Endothelial cell of umbilical vein (primary cell): ENCODE measurements at regions of chr7 and their contacts with region 1.

Region 1: DNA sequence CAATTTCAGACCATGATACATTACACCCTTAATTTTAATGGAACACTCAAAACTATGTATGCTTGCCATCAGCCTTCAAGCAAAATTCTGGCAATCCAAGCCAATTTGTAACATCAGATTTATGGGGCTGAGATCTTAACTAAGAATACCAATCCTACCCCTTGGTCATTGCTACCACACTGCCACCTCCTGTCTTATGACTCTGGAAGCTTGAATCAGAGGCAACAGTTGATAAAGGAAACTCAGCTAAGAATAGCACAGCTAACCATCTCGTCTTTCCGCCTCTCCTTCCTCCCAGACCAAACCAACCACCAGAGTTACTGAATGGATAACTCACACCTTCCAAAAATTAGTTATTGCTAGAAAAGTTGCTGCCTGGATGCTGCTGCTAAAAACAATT is 7.4 kb downstream of the IGF2BP3 start:
- DNase-seq: peak; percentile 81
- H3K4me3 ChIP-seq: no peak overlapping the region
- H3K27ac ChIP-seq: peak overlapping the region; percentile 31
- H3K4me1 ChIP-seq: peaks cover 42% of the 10 kb centered on the region
- H3K27me3 ChIP-seq: no peaks in the 10 kb centered on the region
- CTCF ChIP-seq: peak; percentile 25 to 41
- POLR2A ChIP-seq: no peak

Region 2: GRCh38 chr7:23279819-23280525 is 182.9 kb before region 1 on chr7:
- CTCF ChIA-PET with region 1: interaction called, 18 read pairs
- POLR2A ChIA-PET with region 1: no interaction called
- dilution Hi-C with region 1: no loop called
- intact Hi-C with region 1: loop called (anchors 1 kb)
- DNase-seq: no peak
- H3K4me3 ChIP-seq: no peak overlapping the region
- H3K27ac ChIP-seq: no peak overlapping the region
- H3K4me1 ChIP-seq: no peaks in the 10 kb centered on the region
- H3K27me3 ChIP-seq: no peaks in the 10 kb centered on the region
- CTCF ChIP-seq: no peak
- POLR2A ChIP-seq: no peak

Region 3: GRCh38 chr7:23347682-23348180 is 115.1 kb before region 1 on chr7:
- CTCF ChIA-PET with region 1: interaction called, 24 read pairs
- POLR2A ChIA-PET with region 1: no interaction called
- dilution Hi-C with region 1: no loop called
- intact Hi-C with region 1: no loop called
- DNase-seq: peak; percentile 88
- H3K4me3 ChIP-seq: peak overlapping the region; percentile 27 to 67 (median 61)
- H3K27ac ChIP-seq: peak overlapping the region; percentile 88
- H3K4me1 ChIP-seq: peaks cover 80% of the 10 kb centered on the region
- H3K27me3 ChIP-seq: no peaks in the 10 kb centered on the region
- CTCF ChIP-seq: no peak
- POLR2A ChIP-seq: peak; percentile 44

Region 4: DNA sequence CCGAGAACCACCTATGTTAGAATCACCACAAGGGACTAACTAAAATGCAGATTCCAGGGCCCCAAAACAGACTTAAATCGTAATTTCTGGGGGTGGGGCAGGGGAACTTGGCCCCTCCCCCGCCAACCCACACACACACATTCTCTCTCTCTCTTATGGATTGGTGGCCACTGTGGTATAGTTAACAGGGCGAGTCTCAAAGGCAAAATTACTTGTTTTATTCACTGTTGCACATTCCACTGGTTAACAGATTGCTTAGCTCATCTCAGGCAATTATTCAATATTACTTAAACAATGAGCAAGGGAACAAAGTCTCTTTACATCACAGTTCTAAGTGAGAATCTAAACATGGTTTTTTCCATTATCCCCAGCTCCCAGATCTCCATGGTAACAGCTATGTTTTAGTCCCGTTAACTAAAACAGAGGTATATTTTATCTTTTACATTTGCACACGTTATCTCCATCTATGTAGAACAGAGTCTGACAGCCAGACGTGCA is 31.1 kb before region 1 on chr7:
- CTCF ChIA-PET with region 1: interaction called, 15 read pairs
- POLR2A ChIA-PET with region 1: interaction called, 4 read pairs
- dilution Hi-C with region 1: no loop called
- intact Hi-C with region 1: loop called (anchors 1 kb)
- DNase-seq: no peak
- H3K4me3 ChIP-seq: no peak overlapping the region
- H3K27ac ChIP-seq: peak overlapping the region; percentile 49
- H3K4me1 ChIP-seq: peaks cover 22% of the 10 kb centered on the region
- H3K27me3 ChIP-seq: no peaks in the 10 kb centered on the region
- CTCF ChIP-seq: no peak
- POLR2A ChIP-seq: no peak

Region 5: GRCh38 chr7:23445326-23445725 is 17.5 kb before region 1 on chr7:
- CTCF ChIA-PET with region 1: interaction called, 28 read pairs
- POLR2A ChIA-PET with region 1: interaction called, 3 read pairs
- dilution Hi-C with region 1: no loop called
- intact Hi-C with region 1: no loop called
- DNase-seq: no peak
- H3K4me3 ChIP-seq: no peak overlapping the region
- H3K27ac ChIP-seq: no peak overlapping the region
- H3K4me1 ChIP-seq: no peaks in the 10 kb centered on the region
- H3K27me3 ChIP-seq: no peaks in the 10 kb centered on the region
- CTCF ChIP-seq: no peak
- POLR2A ChIP-seq: no peak

Region 6: DNA sequence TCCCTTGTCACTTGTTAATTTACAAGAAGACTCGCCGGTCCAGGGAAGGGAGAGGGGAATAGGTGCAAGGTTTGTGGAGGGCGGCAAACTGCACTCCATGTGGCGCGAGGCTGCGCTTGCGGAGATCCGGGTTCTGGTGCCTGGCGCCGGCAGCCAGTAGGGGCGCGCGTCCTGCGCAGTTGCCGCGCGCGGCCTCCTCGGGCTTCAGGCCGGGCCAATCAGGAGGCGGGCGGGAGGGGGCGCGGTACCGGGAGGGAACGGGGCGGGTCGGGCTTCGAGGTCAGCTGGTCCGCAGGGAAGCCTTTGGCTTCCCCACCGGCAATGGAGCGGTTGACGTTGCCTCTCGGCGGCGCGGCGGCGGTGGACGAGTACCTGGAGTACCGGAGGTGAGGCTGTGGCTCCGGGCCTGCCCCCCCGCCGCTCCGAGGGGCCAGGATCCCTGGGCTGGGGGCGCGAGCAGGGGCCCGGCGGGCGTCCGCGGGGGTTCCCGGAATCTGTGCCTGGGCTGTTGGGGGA is 217.1 kb after region 1 on chr7 and contains the start of gene FAM221A:
- CTCF ChIA-PET with region 1: no interaction called
- POLR2A ChIA-PET with region 1: no interaction called
- dilution Hi-C with region 1: no loop called
- intact Hi-C with region 1: no loop called
- DNase-seq: peak; percentile 84
- H3K4me3 ChIP-seq: peak within 1 kb of the TSS; percentile 40 to 80 (median 72)
- H3K27ac ChIP-seq: no peak within 1 kb of the TSS
- H3K4me1 ChIP-seq: peaks cover 2% of the 10 kb centered on the region
- H3K27me3 ChIP-seq: peaks cover 0 to 5% of the 10 kb centered on the region in 2 experiments
- CTCF ChIP-seq: peak; percentile 70 to 89
- POLR2A ChIP-seq: no peak
- total RNA-seq, gene FAM221A: 6.1 and 8.1 TPM in 2 replicates